Activated naive CD4-positive, alpha-beta T cell treated with anti-CD3 and anti-CD28 coated beads for 36 hours (primary cell): ENCODE measurements at regions of chr3 and their contacts with region 1.

Region 1: DNA sequence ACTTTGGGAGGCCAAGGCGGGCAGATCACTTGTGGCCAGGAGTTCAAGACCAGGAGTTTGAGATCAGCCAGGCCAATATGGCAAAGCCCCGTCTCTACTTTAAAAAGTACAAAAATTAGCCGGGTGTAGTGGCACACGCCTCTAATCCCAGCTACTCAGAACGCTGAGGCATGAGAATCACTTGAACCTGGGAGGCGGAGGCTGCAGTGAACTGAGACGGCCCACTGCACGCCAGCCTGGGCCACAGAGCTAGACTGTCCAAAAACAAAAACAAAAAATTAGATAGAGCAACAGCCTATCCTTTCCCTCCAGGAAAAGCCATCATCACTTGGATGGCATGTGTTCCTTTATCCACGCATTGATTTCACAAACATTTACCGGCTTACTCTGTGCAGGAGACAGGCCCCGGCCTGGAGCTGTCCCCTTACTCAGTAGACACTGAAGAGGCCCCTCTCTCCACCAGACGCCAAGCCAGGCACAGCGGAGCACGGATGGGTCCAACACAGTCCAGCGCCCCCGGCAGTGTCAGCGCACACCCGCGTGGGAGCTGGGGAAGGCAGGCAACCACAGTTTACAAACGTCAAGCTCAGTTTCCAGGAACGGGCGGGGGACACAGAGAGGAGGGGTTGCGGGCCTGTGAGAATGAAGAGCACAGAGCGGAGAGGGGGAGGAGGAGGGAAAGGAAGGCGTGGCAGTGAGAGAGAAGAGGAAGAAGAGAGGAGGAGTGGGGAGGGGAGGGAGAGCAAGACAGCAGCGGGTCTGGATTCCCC is 3.1 kb downstream of the GP5 start:
- DNase-seq: peak; percentile 85
- H3K4me3 Mint-ChIP-seq: peak overlapping the region; percentile 42
- H3K27ac Mint-ChIP-seq: peak overlapping the region; percentile 21
- H3K4me1 Mint-ChIP-seq: peaks cover 53% of the 10 kb centered on the region
- H3K27me3 Mint-ChIP-seq: peaks cover 5% of the 10 kb centered on the region

Region 2: GRCh38 chr3:193780810-193781472 is 615.0 kb before region 1 on chr3:
- CTCF ChIA-PET with region 1: no interaction called
- intact Hi-C with region 1: loop called (anchors 5 kb)
- DNase-seq: peak; percentile 49
- H3K4me3 Mint-ChIP-seq: no peak overlapping the region
- H3K27ac Mint-ChIP-seq: no peak overlapping the region
- H3K4me1 Mint-ChIP-seq: peaks cover 9% of the 10 kb centered on the region
- H3K27me3 Mint-ChIP-seq: peaks cover 25% of the 10 kb centered on the region

Region 3: GRCh38 chr3:194070634-194071409 is 325.1 kb before region 1 on chr3:
- CTCF ChIA-PET with region 1: no interaction called
- intact Hi-C with region 1: loop called (anchors 1 kb)
- DNase-seq: peak; percentile 88
- H3K4me3 Mint-ChIP-seq: peak overlapping the region; percentile 57
- H3K27ac Mint-ChIP-seq: no peak overlapping the region
- H3K4me1 Mint-ChIP-seq: peaks cover 22% of the 10 kb centered on the region
- H3K27me3 Mint-ChIP-seq: peaks cover 19% of the 10 kb centered on the region

Region 4: DNA sequence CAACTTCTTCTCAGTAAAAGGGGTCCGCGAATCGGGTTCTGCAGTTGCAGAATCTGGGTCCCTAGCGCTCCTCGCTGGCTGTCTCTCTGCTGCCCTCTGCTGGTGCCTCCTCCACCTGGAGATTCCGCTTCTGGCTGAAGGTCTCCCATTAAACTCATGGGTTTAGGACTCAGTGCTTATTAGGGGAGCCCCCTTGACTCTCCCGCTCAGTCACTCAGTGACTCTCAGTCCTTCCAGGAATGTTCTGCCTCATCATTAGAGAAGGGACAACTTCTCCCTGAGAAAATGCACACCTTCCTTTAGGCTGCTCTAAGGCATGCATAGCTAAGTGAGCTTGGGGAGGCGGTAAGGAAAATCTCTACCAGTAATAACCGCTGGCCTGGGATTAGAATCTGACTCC is 52.0 kb before region 1 on chr3:
- CTCF ChIA-PET with region 1: interaction called, 166 read pairs
- intact Hi-C with region 1: loop called (anchors 2 kb)
- DNase-seq: peak; percentile 81
- H3K4me3 Mint-ChIP-seq: no peak overlapping the region
- H3K27ac Mint-ChIP-seq: no peak overlapping the region
- H3K4me1 Mint-ChIP-seq: no peaks in the 10 kb centered on the region
- H3K27me3 Mint-ChIP-seq: no peaks in the 10 kb centered on the region

Region 5: GRCh38 chr3:194583604-194584318 is 187.8 kb after region 1 on chr3:
- CTCF ChIA-PET with region 1: no interaction called
- intact Hi-C with region 1: loop called (anchors 2 kb)
- DNase-seq: peak; percentile 94
- H3K4me3 Mint-ChIP-seq: peak overlapping the region; percentile 94
- H3K27ac Mint-ChIP-seq: peak overlapping the region; percentile 94
- H3K4me1 Mint-ChIP-seq: peaks cover 19% of the 10 kb centered on the region
- H3K27me3 Mint-ChIP-seq: no peaks in the 10 kb centered on the region

Region 6: GRCh38 chr3:194632809-194633348 is 236.9 kb after region 1 on chr3:
- CTCF ChIA-PET with region 1: no interaction called
- intact Hi-C with region 1: loop called (anchors 5 kb)
- DNase-seq: peak; percentile 24
- H3K4me3 Mint-ChIP-seq: peak overlapping the region; percentile 85
- H3K27ac Mint-ChIP-seq: peak overlapping the region; percentile 53
- H3K4me1 Mint-ChIP-seq: peaks cover 6% of the 10 kb centered on the region
- H3K27me3 Mint-ChIP-seq: no peaks in the 10 kb centered on the region

Region 7: GRCh38 chr3:195075199-195075940 is 679.4 kb after region 1 on chr3:
- CTCF ChIA-PET with region 1: no interaction called
- intact Hi-C with region 1: no loop called
- DNase-seq: no peak
- H3K4me3 Mint-ChIP-seq: no peak overlapping the region
- H3K27ac Mint-ChIP-seq: no peak overlapping the region
- H3K4me1 Mint-ChIP-seq: no peaks in the 10 kb centered on the region
- H3K27me3 Mint-ChIP-seq: no peaks in the 10 kb centered on the region